ENCODE measurements at regions of chr9 and their contacts with region 1.

Region 1: DNA sequence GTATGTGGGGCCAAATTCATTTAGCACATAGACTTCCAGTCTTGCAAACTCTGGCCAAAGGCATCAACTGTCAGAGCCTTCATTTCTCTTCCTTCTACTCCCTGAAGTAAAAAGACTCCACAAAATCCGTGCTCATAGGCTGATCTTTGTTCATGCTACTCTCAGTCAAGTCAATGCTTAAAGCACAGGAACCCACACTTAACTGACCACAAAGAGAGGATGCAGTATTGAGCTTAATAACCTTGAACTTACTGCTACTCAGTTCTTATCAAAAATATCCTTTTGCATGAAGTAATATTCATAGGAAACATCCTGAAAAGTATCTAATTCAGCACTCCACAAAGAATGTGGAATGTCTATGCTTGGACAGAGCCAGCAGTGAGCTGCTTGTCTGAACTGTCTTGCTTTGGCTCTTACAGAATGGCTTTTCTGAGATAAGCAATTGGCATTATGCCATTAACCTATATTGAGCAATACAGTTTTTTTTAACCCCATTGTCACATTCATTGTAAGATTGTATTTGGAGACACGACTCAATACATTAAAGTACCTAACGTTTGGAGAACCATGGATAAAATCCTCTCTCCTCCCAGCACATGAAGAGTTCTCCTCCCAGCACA is 21.7 kb downstream of the LPAR1 start:
- DNase-seq: peak in 1 of 2 experiments; percentile 51
- H3K4me3 ChIP-seq: no peak overlapping the region
- H3K27ac ChIP-seq: no peak overlapping the region
- H3K4me1 ChIP-seq: peaks cover 22% of the 10 kb centered on the region
- H3K27me3 ChIP-seq: no peaks in the 10 kb centered on the region
- CTCF ChIP-seq: no peak

Region 2: DNA sequence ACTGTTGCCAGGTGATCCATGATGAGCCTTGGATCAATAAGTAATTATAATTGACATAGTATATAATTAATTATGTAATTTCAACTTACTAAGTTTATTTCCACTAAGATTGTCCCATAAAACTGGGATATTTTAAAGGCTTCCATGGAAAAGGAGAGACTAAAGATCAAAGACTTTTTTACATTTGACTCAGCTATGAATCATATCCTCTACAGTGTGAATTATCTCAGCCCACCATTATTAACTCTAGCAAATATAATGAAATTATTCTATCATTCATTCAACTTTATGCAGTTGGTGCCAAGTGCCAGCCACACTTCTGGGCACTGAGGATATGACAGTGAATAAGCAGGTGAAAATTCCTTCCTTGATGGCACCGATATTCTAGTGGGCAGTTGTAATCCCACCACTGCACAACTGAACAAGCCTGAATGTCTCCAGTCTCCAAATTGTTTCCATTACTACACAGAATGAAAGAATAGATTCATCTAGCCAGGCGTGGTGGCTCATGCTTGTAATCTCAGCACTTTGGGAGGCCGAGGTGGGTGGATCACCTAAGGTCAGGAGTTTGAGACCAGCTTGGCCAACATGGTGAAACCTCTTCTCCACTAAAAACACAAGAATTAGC is 738.3 kb before region 1 on chr9:
- CTCF ChIA-PET with region 1: no interaction called
- POLR2A ChIA-PET with region 1: no interaction called
- intact Hi-C with region 1: no loop called
- DNase-seq: peak in 1 of 2 experiments; percentile 61
- H3K4me3 ChIP-seq: no peak overlapping the region
- H3K27ac ChIP-seq: peak overlapping the region; percentile 63
- H3K4me1 ChIP-seq: peaks cover 40% of the 10 kb centered on the region
- H3K27me3 ChIP-seq: no peaks in the 10 kb centered on the region
- CTCF ChIP-seq: no peak

Region 3: GRCh38 chr9:110874963-110875674 is 141.4 kb before region 1 on chr9:
- CTCF ChIA-PET with region 1: no interaction called
- POLR2A ChIA-PET with region 1: no interaction called
- intact Hi-C with region 1: no loop called
- DNase-seq: no peak
- H3K4me3 ChIP-seq: no peak overlapping the region
- H3K27ac ChIP-seq: no peak overlapping the region
- H3K4me1 ChIP-seq: no peaks in the 10 kb centered on the region
- H3K27me3 ChIP-seq: no peaks in the 10 kb centered on the region
- CTCF ChIP-seq: no peak

Region 4: DNA sequence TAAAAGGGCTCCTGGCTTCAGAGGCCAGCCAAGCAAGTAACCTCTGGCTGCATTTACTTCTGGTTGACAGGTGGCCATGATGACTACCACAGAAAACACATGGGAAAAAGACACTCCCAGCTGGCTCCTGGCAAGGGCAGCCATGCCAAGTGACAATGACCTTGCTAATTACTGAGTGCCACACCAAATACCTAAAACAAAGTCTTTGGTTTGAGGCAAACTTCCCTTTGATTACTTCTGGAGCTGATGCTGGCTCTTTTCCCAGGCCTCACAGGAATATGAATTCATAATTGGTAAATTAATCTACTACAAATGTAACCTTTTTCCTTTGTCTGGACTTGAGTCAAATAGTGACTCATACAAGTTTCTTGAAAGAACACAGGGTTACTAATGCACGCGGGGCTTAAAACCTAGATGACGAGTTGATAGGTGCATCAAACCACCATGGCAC is 39.3 kb before region 1 on chr9:
- CTCF ChIA-PET with region 1: no interaction called
- POLR2A ChIA-PET with region 1: no interaction called
- intact Hi-C with region 1: loop called (anchors 5 kb)
- DNase-seq: peak; percentile 67 to 84
- H3K4me3 ChIP-seq: no peak overlapping the region
- H3K27ac ChIP-seq: peak overlapping the region; percentile 58
- H3K4me1 ChIP-seq: peaks cover 11% of the 10 kb centered on the region
- H3K27me3 ChIP-seq: no peaks in the 10 kb centered on the region
- CTCF ChIP-seq: no peak

Region 5: DNA sequence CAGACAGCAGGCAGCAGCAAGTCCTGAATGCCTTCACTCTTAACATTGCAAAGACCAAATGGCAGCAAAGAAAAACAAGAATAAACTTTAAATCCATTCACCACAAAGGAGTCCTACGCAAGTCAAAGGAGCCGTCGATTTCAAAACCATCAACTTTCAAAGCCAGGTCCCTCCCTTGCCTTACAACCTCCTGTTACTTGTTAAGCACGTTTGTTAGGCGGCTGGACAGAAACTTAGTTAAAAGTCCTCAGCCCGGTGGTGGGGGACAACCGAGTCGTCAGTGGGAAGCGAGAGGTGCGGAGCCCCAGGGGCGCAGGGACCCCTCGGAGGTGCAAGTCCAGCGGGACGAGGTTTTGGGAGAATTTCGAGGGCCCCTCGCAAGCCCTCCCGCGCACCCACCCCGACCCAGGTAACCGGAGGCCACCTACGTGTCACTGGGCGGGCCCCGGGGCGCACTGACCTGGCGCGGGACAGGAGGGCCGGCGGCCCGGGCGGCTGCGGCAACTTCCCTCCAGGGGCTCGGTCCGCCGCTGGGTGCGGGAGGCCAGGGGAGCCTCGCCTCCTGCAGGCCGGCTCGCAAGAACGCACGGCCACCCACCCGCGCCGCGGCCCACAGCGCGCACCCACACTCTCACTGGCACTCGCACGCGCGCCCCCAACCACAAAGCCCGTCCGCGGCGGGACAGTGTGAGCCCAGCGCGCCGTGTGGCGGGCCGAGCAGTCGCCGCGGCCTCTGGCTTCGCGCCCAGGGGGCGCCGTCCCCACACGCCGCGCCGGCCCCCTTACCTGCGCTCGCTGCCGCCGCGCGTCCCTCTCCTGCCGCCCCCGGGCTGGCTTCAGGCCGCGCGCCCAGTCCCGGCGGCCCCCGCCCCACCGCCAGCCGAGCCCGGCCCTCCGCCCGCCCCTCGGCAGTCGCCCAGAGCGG is 21.1 kb after region 1 on chr9:
- CTCF ChIA-PET with region 1: interaction called, 12 read pairs
- POLR2A ChIA-PET with region 1: no interaction called
- intact Hi-C with region 1: no loop called
- DNase-seq: peak in 1 of 2 experiments; percentile 57
- H3K4me3 ChIP-seq: peak overlapping the region; percentile 74
- H3K27ac ChIP-seq: peak overlapping the region; percentile 3; the same call in 1 of the 2 replicates
- H3K4me1 ChIP-seq: peaks cover 16% of the 10 kb centered on the region
- H3K27me3 ChIP-seq: no peaks in the 10 kb centered on the region
- CTCF ChIP-seq: no peak; the same call in 1 of the 2 replicates

Region 6: DNA sequence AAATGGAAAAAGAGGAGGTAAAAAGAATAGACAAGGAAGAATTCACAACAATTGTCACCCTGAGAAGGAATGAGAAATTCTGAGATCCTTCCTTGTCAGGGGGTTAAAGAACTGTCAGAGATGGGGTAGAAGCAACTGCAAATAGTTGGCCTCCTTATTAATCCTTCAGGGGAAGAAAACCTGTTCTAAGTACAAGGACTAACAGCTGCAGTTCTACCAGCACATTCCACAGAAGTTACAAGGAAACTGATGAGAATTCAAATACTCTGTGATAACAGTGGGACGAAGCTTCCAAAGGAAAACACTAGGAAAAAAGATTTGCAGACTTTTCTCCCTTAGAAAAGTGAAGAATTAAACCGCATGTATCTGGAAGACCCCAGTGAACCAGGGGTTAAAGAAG is 219.8 kb after region 1 on chr9:
- CTCF ChIA-PET with region 1: no interaction called
- POLR2A ChIA-PET with region 1: no interaction called
- intact Hi-C with region 1: no loop called
- DNase-seq: no peak
- H3K4me3 ChIP-seq: no peak overlapping the region
- H3K27ac ChIP-seq: no peak overlapping the region
- H3K4me1 ChIP-seq: no peaks in the 10 kb centered on the region
- H3K27me3 ChIP-seq: no peaks in the 10 kb centered on the region
- CTCF ChIP-seq: no peak

Region 7: GRCh38 chr9:111348821-111349271 is 332.3 kb after region 1 on chr9:
- CTCF ChIA-PET with region 1: no interaction called
- POLR2A ChIA-PET with region 1: no interaction called
- intact Hi-C with region 1: no loop called
- DNase-seq: peak in 1 of 2 experiments; percentile 55
- H3K4me3 ChIP-seq: no peak overlapping the region
- H3K27ac ChIP-seq: no peak overlapping the region
- H3K4me1 ChIP-seq: no peaks in the 10 kb centered on the region
- H3K27me3 ChIP-seq: no peaks in the 10 kb centered on the region
- CTCF ChIP-seq: no peak

Measured in PC-9 (cell line).